Cardiac septum (tissue), 1 donor: ENCODE measurements at regions of chr16 and their contacts with region 1.

Region 1: GRCh38 chr16:9090960-9091866 is at the start of gene HAPSTR1:
- DNase-seq: peak; percentile 100
- total RNA-seq, gene HAPSTR1: 59.6 TPM

Region 2: DNA sequence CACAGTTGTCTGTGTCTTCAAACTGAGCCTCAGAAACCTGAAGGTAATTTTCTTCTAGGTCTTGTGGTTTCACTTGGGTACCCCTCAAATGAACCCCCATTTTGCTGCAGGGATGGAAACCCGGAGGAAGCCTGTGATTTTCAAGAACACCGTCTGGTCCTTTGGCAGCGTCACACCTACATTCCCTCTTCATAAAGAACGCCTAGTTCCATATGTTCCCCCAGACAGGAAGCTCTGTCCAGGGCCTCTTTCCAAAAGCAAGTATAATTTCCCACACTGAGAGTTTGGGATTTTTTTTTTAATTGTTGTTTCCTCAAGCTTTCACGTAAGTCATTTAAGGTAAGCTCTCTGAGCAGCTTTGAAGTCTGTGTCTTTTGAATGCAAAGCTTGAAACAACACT is 1015.9 kb before region 1 on chr16:
- intact Hi-C with region 1: no loop called
- DNase-seq: no peak

Region 3: GRCh38 chr16:8621572-8622314 is 469.5 kb before region 1 on chr16 and contains the start of gene METTL22:
- intact Hi-C with region 1: loop called (anchors 5 kb)
- DNase-seq: peak; percentile 96
- total RNA-seq, gene METTL22: 31.9 TPM

Region 4: DNA sequence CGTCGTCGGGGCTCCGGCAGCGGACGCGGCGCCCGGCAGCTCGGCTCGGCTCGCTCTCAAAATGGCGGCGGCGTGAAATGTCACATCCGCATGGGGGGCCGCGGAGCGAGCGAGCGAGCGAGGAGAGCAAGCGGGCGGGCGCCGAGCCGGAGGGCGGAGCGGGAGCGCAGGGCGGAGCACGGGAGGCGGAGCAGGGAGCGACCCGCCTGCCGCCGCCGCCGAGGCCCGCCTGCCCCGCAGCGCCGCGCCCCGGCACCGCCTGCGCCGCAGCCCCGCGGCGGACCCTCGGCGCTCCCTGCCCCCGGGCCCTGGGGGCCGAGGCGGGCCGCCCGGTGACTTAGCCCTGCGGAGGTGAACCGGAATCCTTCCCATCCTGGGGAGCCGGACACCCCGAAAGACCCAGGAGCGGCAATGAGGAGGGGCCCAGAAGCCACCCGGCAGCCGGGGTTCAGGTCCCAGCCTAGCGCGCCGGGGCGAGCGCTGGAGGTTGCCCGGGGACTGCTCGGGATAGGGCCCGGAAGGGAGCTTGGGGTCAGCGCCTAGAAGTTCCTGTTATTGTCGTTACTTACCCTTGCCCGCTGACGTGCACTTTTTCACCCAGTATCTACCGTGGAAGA is 127.3 kb before region 1 on chr16 and contains the start of gene USP7:
- intact Hi-C with region 1: loop called (anchors 2 kb)
- DNase-seq: peak; percentile 97
- total RNA-seq, gene USP7: 74.6 TPM

Region 5: DNA sequence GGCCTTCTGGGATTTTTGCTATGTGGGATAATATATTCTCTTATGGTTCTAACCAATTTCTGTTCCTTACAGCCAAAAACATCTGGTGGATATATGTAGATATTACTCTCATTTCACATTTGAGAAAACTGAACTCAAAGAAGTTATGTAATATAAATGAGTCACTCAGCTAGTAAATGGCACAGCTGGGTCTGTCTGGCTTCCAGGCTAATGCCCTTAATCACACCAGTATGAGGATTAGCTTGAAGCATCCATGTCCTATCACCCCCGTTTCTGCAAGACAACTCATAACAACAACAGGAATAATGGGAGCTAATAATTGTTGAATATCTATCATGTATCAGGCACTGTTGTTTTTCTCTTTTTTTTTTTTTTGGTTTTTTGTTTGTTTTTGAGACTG is 93.1 kb before region 1 on chr16:
- intact Hi-C with region 1: no loop called
- DNase-seq: no peak

Region 6: GRCh38 chr16:9047686-9048301 is 43.4 kb before region 1 on chr16:
- intact Hi-C with region 1: loop called (anchors 5 kb)
- DNase-seq: peak; percentile 93

Region 7: GRCh38 chr16:9151597-9151996 is 60.4 kb after region 1 on chr16:
- intact Hi-C with region 1: no loop called
- DNase-seq: no peak